ENCODE measurements at regions of chr15 and their contacts with region 1.

Region 1: DNA sequence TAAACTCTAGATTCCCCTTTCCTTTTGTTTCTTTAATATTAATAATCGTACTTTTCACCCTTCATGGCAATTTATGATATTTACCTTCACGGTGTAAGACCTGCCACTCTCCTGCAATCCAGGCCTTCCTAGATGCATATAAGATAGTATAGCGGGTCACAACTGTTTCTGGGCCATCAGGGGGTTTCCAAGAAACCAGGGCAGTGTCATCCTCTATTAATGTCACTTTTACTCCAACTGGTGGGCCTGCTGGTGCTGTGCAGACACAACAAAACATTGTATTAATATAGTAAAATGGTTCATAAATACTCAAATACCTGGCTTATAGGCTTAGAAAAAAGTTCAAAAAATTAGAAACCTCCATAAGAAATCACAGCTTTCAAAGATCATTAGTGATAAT is 48.9 kb upstream of the PYGO1 start:
- DNase-seq: no peak
- H3K4me3 Mint-ChIP-seq: no peak overlapping the region
- H3K27ac Mint-ChIP-seq: no peak overlapping the region
- H3K4me1 Mint-ChIP-seq: no peaks in the 10 kb centered on the region
- H3K27me3 Mint-ChIP-seq: peaks cover 13% of the 10 kb centered on the region

Region 2: DNA sequence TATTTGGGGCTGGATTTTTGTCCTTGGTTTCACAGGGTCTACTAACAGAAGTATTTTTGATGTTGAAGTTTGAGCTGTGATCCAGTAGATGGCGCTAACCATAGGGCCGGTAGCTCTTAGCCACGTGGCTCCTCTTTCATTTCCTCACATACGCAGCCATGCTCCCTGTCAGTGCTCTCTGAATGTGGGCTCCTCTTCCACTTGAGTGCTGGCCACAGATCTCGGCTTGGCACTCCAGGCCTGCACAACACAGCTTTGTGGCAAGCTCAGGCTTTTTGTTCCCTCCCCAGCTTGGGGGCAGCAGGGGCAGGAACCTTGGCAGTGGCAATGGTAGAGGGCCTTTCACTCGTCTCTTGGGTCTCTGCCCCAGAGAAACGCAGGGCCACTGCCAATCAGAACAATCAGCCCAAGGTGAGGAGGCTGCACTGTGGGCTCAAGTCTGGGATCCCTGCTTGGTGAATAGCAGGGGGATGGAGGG is 110.5 kb before region 1 on chr15:
- intact Hi-C with region 1: loop called (anchors 1 kb)
- DNase-seq: no peak
- H3K4me3 Mint-ChIP-seq: no peak overlapping the region
- H3K27ac Mint-ChIP-seq: no peak overlapping the region
- H3K4me1 Mint-ChIP-seq: peaks cover 16% of the 10 kb centered on the region
- H3K27me3 Mint-ChIP-seq: peaks cover 28% of the 10 kb centered on the region

Measured in activated T-helper 2 cell treated with anti-CD3 and anti-CD28 coated beads, Interferon-gamma antibody, Interleukin-2, Interleukin-4, amounts not matched to agents 10 μg/mL and 5 μg/mL and 100 μg/mL, durations not matched to agents 14 hours and 24 hours and 36 hours (primary cell).